ENCODE measurements at regions of chr9 and their contacts with region 1.

Region 1: DNA sequence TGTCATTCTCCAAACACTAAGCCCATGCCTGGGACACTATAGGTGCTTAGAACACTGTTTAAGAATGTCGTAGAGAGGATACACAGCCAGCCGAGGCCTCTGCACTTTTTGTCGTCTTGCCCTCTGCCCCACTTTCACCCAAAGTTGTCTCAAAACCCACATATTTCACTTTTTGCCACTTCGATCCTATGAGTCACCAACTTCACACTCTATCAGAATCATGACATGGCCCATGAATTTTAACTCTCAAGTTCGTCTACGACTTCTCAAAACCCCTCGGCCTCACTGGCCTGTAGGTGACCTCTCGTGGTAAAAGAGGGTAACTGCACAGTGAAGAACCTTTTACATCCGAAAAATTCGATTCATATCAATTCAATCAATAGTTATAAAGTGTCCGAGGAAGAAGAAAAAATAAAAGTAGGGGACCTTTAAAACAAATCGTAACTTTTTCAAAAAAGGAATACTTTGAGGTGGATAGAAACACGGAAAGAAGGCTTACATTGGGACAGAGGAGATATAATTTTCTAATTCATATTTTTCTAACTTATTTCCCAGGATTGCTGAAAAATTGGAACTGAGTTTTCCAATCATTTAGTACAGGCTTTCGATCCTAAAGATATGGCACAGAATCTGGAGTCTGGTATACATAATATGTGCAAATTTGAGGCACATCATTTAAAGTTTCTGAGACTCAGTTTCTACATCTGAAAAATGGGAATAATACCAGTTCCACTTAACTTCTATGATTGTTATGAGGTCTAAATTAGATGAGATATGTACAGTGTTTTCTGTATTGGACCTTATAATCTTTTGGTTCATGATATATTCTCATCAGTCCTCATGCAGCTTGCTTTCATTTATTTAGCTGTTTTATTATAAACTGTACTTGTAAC is 122.6 kb downstream of the APBA1 start:
- DNase-seq: peak; percentile 63 to 70
- H3K4me3 ChIP-seq: no peak overlapping the region
- H3K4me1 ChIP-seq: no peaks in the 10 kb centered on the region
- H3K27me3 ChIP-seq: no peaks in the 10 kb centered on the region

Region 2: GRCh38 chr9:69357030-69357775 is 192.4 kb before region 1 on chr9:
- in situ Hi-C with region 1: no loop called
- DNase-seq: no peak
- H3K4me3 ChIP-seq: no peak overlapping the region
- H3K4me1 ChIP-seq: no peaks in the 10 kb centered on the region
- H3K27me3 ChIP-seq: peaks cover 15% of the 10 kb centered on the region; the same call in 1 of the 2 replicates

Region 3: GRCh38 chr9:69421908-69422801 is 127.4 kb before region 1 on chr9:
- in situ Hi-C with region 1: loop called (anchors 5 kb)
- DNase-seq: peak; percentile 43 to 74
- H3K4me3 ChIP-seq: no peak overlapping the region
- H3K4me1 ChIP-seq: 0 out of 2 replicates have a peak, but pooled peaks cover 2% of the 10 kb centered on the region
- H3K27me3 ChIP-seq: no peaks in the 10 kb centered on the region

Region 4: GRCh38 chr9:69932901-69933300 is 383.3 kb after region 1 on chr9:
- in situ Hi-C with region 1: loop called (anchors 10 kb)
- DNase-seq: peak in 1 of 2 experiments; percentile 59
- H3K4me3 ChIP-seq: no peak overlapping the region
- H3K4me1 ChIP-seq: no peaks in the 10 kb centered on the region
- H3K27me3 ChIP-seq: no peaks in the 10 kb centered on the region